ENCODE measurements at regions of chr3 and their contacts with region 1.

Region 1: DNA sequence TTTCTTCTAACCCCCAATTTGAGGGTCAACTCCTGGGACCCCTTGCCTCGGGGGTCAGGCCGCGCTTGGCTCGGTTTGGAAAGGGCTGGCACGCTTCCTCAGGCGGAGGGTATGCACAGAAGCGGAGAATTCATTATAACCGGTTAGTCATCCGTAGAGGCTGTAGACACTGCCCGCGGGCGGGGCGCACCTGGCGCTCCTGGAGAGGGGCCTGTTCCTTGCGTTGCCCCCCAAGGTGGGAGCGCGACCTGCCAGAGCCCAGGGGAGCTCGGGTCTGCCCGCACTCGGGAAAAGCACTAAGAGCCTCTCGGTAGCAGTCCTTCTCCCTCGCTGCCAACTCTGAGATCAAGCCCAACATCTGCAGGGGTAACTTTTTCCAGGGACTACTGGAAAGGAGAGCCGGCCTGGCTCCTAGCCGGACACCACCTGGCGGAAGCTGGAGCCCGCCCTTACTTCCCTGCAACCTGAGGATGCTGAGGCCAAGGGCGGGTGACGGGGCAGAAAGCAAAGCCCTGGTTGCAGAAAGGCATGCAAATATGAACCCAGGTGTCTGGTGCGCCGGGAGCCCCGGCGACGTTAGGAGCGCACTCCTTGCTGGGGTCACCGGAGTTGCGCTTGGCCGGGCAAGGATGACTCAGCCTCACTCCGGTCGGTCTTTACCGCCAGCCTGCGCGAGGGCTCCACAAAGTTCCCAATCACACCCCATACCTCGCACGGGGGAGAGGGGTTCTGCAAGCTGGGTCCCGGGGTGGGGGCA is 1.5 kb upstream of the CACNA2D3 start:
- DNase-seq: peak; percentile 70
- H3K4me3 ChIP-seq: peak overlapping the region; percentile 56 to 76 (median 70)
- H3K27ac ChIP-seq: peak overlapping the region in 1 of 4 donors; percentile 88
- H3K4me1 ChIP-seq: peaks cover 0 to 29% (median 20%) of the 10 kb centered on the region in 4 donors
- H3K27me3 ChIP-seq: peaks cover 0 to 24% (median 0%) of the 10 kb centered on the region in 3 donors
- CTCF ChIP-seq: no peak
- EP300 ChIP-seq: no peak
- POLR2A ChIP-seq: no peak

Region 2: GRCh38 chr3:53891497-53892285 is 229.1 kb before region 1 on chr3 and contains the start of gene SELENOK:
- intact Hi-C with region 1: loop called (anchors 5 kb)
- DNase-seq: peak; percentile 100
- H3K4me3 ChIP-seq: peak within 1 kb of the TSS; percentile 69 to 91 (median 81)
- H3K27ac ChIP-seq: peak within 1 kb of the TSS; percentile 88 to 97 (median 93)
- H3K4me1 ChIP-seq: peaks cover 0 to 21% (median 19%) of the 10 kb centered on the region in 4 donors
- H3K27me3 ChIP-seq: peaks cover 0 to 4% (median 0%) of the 10 kb centered on the region in 3 donors
- CTCF ChIP-seq: no peak
- EP300 ChIP-seq: peak in 2 of 4 donors; percentile 47 to 78
- POLR2A ChIP-seq: peak; percentile 96 to 98
- total RNA-seq, gene SELENOK: 61.5 to 108 (median 77.7) TPM

Region 3: GRCh38 chr3:54939557-54940300 is 818.9 kb after region 1 on chr3:
- intact Hi-C with region 1: no loop called
- DNase-seq: no peak
- H3K4me3 ChIP-seq: no peak overlapping the region
- H3K27ac ChIP-seq: no peak overlapping the region
- H3K4me1 ChIP-seq: no peaks in the 10 kb centered on the region
- H3K27me3 ChIP-seq: no peaks in the 10 kb centered on the region
- CTCF ChIP-seq: no peak
- EP300 ChIP-seq: no peak
- POLR2A ChIP-seq: no peak